ENCODE measurements at regions of chr3 and their contacts with region 1.

Region 1: DNA sequence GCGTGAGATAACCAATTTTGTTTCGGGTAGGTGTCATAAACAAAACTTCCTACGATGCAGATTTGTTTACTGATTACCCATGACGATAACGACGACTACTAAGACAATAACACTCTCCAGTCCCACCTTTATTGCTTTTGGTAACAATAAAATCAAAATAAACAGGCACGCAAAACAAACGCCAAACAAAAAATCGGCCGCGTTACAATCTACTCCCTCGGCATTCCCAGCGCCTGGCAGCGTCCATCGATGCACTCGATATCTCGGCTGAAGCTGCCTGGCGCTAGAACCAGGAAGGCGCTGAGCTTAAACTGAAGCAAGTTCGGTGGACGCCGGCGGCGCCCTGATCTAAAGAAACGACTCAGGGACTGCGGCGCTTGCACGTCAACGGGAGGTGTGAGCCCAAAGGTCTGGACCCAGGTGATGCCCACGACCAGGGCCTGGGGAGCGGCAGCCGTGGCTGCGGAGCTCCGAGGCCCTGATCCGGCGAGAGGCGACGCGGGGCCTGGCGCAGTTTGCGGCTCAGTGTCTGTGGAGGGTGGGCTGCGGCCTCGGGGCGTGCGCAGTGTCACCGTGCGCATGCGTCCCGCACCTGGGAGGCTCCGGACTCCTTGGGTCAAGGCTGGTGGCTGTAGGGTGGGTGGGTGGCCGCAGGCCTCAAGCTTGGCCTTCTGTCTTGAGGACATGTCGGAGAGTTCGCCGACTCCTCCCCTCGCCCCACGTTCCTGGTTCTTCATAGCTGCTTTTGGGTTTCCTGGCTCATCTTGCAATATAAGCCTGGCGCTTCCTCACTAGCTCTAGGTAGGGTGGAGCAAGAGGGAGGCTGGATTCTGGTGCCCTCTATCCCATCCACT is at the start of gene RSRC1:
- DNase-seq: peak; percentile 89
- H3K4me3 ChIP-seq: peak within 1 kb of the TSS; percentile 65 to 87 (median 86)
- H3K27ac ChIP-seq: peak within 1 kb of the TSS; percentile 74
- H3K4me1 ChIP-seq: peaks cover 17% of the 10 kb centered on the region
- H3K27me3 ChIP-seq: peaks cover 11% of the 10 kb centered on the region
- CTCF ChIP-seq: no peak
- total RNA-seq, gene RSRC1: 30.0 to 35.6 TPM

Region 2: DNA sequence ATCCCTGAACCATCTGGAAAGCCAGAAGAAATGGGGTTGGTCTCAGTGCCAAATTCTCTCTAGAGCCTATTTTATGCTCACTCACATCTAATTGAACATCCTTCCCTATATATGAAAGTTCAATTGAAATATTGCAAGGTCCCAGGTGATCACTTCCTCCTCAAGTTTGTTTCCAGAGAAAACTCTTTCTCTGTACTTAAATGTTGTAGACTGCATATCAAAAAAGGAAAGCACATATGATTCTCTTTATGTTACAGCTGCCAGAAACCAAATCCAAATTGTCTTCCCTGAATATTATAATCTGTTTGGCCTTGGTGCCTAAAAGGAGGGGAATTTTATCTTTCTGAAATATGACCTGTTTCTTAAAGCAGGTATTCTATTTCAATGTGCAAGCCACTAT is 97.1 kb before region 1 on chr3:
- CTCF ChIA-PET with region 1: no interaction called
- dilution Hi-C with region 1: no loop called
- in situ Hi-C with region 1: no loop called
- intact Hi-C with region 1: no loop called
- DNase-seq: no peak
- H3K4me3 ChIP-seq: no peak overlapping the region
- H3K27ac ChIP-seq: no peak overlapping the region
- H3K4me1 ChIP-seq: no peaks in the 10 kb centered on the region
- H3K27me3 ChIP-seq: no peaks in the 10 kb centered on the region
- CTCF ChIP-seq: no peak

Region 3: DNA sequence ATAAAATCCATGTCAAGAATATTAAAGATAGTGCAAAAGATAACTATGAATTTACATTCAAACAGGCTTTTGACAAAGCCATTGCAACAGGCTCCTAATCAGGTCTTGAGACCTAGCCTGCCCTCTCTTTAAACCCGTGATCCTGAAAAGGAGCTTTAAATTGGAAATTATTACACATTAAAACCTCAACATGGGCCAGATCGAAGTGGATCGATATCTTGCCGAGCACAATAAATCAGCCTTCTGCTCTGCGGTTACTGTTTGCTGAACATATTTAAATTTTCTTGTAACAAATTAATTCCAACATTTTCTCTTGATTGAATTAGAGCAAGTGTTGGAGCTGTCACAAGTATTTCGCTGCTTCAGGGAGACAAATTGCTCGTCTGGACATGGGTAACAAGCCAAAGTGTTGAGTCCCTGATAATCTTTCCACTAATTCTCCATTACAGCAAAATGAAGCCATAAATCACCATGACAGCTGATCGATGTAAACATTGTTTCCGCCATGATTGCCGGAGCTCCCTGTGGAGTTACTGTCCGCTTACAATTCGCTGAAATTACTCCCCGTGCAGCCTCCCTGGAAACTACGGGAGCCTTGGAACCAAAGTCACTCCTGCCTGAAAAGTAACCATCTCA is 51.4 kb before region 1 on chr3:
- CTCF ChIA-PET with region 1: interaction called, 11 read pairs
- dilution Hi-C with region 1: no loop called
- in situ Hi-C with region 1: no loop called
- intact Hi-C with region 1: no loop called
- DNase-seq: no peak
- H3K4me3 ChIP-seq: no peak overlapping the region
- H3K27ac ChIP-seq: no peak overlapping the region
- H3K4me1 ChIP-seq: no peaks in the 10 kb centered on the region
- H3K27me3 ChIP-seq: no peaks in the 10 kb centered on the region
- CTCF ChIP-seq: no peak

Region 4: GRCh38 chr3:158160966-158161365 is 50.9 kb after region 1 on chr3:
- CTCF ChIA-PET with region 1: interaction called, 13 read pairs
- dilution Hi-C with region 1: no loop called
- in situ Hi-C with region 1: no loop called
- intact Hi-C with region 1: loop called (anchors 1 kb)
- DNase-seq: peak; percentile 85
- H3K4me3 ChIP-seq: no peak overlapping the region
- H3K27ac ChIP-seq: no peak overlapping the region
- H3K4me1 ChIP-seq: peaks cover 12% of the 10 kb centered on the region
- H3K27me3 ChIP-seq: no peaks in the 10 kb centered on the region
- CTCF ChIP-seq: no peak

Region 5: GRCh38 chr3:158167737-158168471 is 57.9 kb after region 1 on chr3:
- CTCF ChIA-PET with region 1: interaction called, 13 read pairs
- dilution Hi-C with region 1: no loop called
- in situ Hi-C with region 1: no loop called
- intact Hi-C with region 1: loop called (anchors 2 kb)
- DNase-seq: peak; percentile 95
- H3K4me3 ChIP-seq: no peak overlapping the region
- H3K27ac ChIP-seq: no peak overlapping the region
- H3K4me1 ChIP-seq: peaks cover 12% of the 10 kb centered on the region
- H3K27me3 ChIP-seq: no peaks in the 10 kb centered on the region
- CTCF ChIP-seq: no peak

Region 6: GRCh38 chr3:158420654-158421396 is 310.8 kb after region 1 on chr3:
- CTCF ChIA-PET with region 1: no interaction called
- dilution Hi-C with region 1: no loop called
- in situ Hi-C with region 1: loop called in 1 of 2 experiments (anchors 25 kb)
- intact Hi-C with region 1: no loop called
- DNase-seq: peak; percentile 98
- H3K4me3 ChIP-seq: peak overlapping the region in 1 of 3 experiments; percentile 15
- H3K27ac ChIP-seq: peak overlapping the region; percentile 82
- H3K4me1 ChIP-seq: peaks cover 19% of the 10 kb centered on the region
- H3K27me3 ChIP-seq: no peaks in the 10 kb centered on the region
- CTCF ChIP-seq: no peak

Region 7: DNA sequence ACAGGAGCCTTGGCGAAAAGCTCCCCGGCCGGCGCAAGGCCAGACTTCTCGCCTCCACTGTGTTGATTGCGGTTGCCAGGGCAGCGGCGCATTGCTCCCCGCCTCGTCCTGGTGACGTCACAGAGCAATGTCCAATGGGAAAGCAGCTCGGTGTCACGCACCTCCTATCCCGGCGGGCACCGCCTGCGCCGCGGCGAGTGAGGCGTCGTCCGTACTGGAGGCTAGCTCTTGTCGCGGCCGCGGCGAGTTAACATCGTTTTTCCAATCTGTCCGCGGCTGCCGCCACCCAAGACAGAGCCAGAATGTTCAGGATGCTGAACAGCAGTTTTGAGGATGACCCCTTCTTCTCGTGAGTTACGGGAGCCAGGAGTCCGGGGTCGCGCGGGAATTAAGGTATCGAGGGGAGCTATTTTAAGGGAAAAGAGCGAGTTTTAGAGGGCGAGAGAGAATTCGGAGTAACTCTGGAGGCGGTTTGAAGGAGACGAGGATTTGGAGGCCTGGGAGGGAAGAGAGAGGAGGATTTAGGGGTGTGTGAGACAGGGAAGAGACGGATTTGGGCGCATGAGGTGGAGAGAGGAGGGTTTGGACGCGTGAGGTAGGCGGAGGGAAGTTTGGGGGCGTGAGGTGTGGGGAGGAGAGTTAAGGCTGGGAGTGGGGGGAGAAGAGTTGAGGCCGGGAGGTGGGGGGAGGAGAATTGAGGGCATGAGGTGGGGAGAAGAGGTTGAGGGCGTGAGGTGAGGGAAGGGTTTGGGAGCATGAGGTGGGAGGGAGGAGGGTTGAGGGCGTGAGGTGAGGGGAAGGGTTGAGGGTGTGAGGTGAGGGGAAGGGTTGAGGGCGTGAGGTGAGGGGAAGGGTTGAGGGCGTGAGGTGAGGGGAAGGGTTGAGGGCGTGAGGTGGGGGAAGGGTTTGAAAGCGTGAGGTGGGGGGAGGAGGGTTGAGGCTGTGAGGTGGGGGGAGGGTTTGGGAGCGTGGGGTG is 461.3 kb after region 1 on chr3 and contains the start of gene MLF1:
- CTCF ChIA-PET with region 1: interaction called, 12 read pairs
- dilution Hi-C with region 1: no loop called
- in situ Hi-C with region 1: no loop called
- intact Hi-C with region 1: no loop called
- DNase-seq: peak; percentile 94
- H3K4me3 ChIP-seq: peak within 1 kb of the TSS; percentile 48 to 77 (median 58)
- H3K27ac ChIP-seq: peak within 1 kb of the TSS; percentile 84
- H3K4me1 ChIP-seq: peaks cover 3% of the 10 kb centered on the region
- H3K27me3 ChIP-seq: no peaks in the 10 kb centered on the region
- CTCF ChIP-seq: no peak
- total RNA-seq, gene MLF1: 10.2 to 12.7 TPM

Measured in mammary epithelial cell (primary cell).